ENCODE measurements at regions of chr9 and their contacts with region 1.

Region 1: GRCh38 chr9:116646661-116647512 is 40.2 kb upstream of the TRIM32 start:
- DNase-seq: peak; percentile 37
- ATAC-seq: peak; percentile 89
- H3K4me3 ChIP-seq: no peak overlapping the region
- H3K27ac ChIP-seq: no peak overlapping the region
- H3K4me1 ChIP-seq: no peaks in the 10 kb centered on the region
- H3K27me3 ChIP-seq: peaks cover 0 to 1% of the 10 kb centered on the region in 2 experiments; a peak in 1 of 5 replicates
- CTCF ChIP-seq: peak; percentile 72
- EP300 ChIP-seq: no peak
- POLR2A ChIP-seq: no peak
- RAD21 ChIP-seq: peak; percentile 35; the same call in 1 of the 2 replicates

Region 2: DNA sequence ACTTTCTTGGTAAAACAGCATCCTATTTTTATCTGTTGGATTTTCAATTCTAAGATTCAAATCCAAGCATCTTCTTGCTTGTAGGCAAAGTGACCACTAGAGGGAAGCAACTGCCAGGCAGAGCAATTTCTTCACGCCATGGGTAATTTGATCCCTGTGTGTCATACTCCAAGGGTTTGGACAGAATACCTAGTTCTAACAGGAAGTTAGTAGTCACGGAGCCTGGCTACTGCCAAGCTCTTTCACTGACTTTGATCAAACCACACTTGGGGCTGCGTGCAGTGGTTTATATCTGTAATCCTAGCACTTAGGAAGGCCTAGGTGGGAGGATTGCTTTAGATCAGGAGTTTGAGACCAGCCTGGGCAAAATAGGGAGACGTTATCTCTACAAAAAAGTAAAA is 1055.3 kb before region 1 on chr9:
- CTCF ChIA-PET with region 1: no interaction called
- POLR2A ChIA-PET with region 1: no interaction called
- in situ Hi-C with region 1: loop called (anchors 10 kb)
- intact Hi-C with region 1: loop called (anchors 5 kb)
- DNase-seq: peak; percentile 74
- ATAC-seq: peak; percentile 98
- H3K4me3 ChIP-seq: no peak overlapping the region
- H3K27ac ChIP-seq: no peak overlapping the region
- H3K4me1 ChIP-seq: no peaks in the 10 kb centered on the region
- H3K27me3 ChIP-seq: no peaks in the 10 kb centered on the region
- CTCF ChIP-seq: peak; percentile 70
- EP300 ChIP-seq: no peak
- POLR2A ChIP-seq: no peak
- RAD21 ChIP-seq: 0 out of 2 replicates have a peak, but pooled peaks have one; percentile 28

Region 3: GRCh38 chr9:116589392-116590354 is 57.2 kb before region 1 on chr9:
- CTCF ChIA-PET with region 1: interaction called, 14 read pairs
- POLR2A ChIA-PET with region 1: no interaction called
- in situ Hi-C with region 1: no loop called
- intact Hi-C with region 1: loop called (anchors 1 kb)
- DNase-seq: peak; percentile 79
- ATAC-seq: peak; percentile 98
- H3K4me3 ChIP-seq: no peak overlapping the region
- H3K27ac ChIP-seq: no peak overlapping the region
- H3K4me1 ChIP-seq: no peaks in the 10 kb centered on the region
- H3K27me3 ChIP-seq: no peaks in the 10 kb centered on the region
- CTCF ChIP-seq: peak; percentile 75
- EP300 ChIP-seq: no peak
- POLR2A ChIP-seq: no peak
- RAD21 ChIP-seq: peak; percentile 53; the same call in 1 of the 2 replicates